Left ventricle myocardium inferior (tissue), 1 donor: ENCODE measurements at regions of chr11 and their contacts with region 1.

Region 1: GRCh38 chr11:93652161-93652597 is 9.3 kb upstream of the CEP295 start:
- DNase-seq: no peak
- H3K4me3 ChIP-seq: no peak overlapping the region
- H3K27ac ChIP-seq: no peak overlapping the region
- H3K4me1 ChIP-seq: no peaks in the 10 kb centered on the region
- H3K27me3 ChIP-seq: peaks cover 33% of the 10 kb centered on the region
- CTCF ChIP-seq: peak; percentile 76

Region 2: GRCh38 chr11:93234602-93235207 is 417.5 kb before region 1 on chr11:
- intact Hi-C with region 1: loop called (anchors 5 kb)
- DNase-seq: peak; percentile 64
- H3K4me3 ChIP-seq: no peak overlapping the region
- H3K27ac ChIP-seq: no peak overlapping the region
- H3K4me1 ChIP-seq: peaks cover 7% of the 10 kb centered on the region
- H3K27me3 ChIP-seq: no peaks in the 10 kb centered on the region
- CTCF ChIP-seq: peak; percentile 96

Region 3: GRCh38 chr11:93487032-93487483 is 165.1 kb before region 1 on chr11:
- intact Hi-C with region 1: loop called (anchors 10 kb)
- DNase-seq: no peak
- H3K4me3 ChIP-seq: no peak overlapping the region
- H3K27ac ChIP-seq: no peak overlapping the region
- H3K4me1 ChIP-seq: peaks cover 26% of the 10 kb centered on the region
- H3K27me3 ChIP-seq: no peaks in the 10 kb centered on the region
- CTCF ChIP-seq: no peak